Dendritic cell treated with granulocyte-macrophage colony-stimulating factor and Interleukin-4, amounts not matched to agents 40 ng/mL and 50 ng/mL, for 4 days (primary cell): ENCODE measurements at regions of chr1 and their contacts with region 1.

Region 1: GRCh38 chr1:151156515-151156819 is at the start of gene TNFAIP8L2:
- H3K4me3 Mint-ChIP-seq: peak within 1 kb of the TSS; percentile 87
- H3K27ac Mint-ChIP-seq: peak within 1 kb of the TSS; percentile 88
- H3K4me1 Mint-ChIP-seq: peaks cover 35% of the 10 kb centered on the region
- H3K27me3 Mint-ChIP-seq: no peaks in the 10 kb centered on the region

Region 2: GRCh38 chr1:150813058-150813707 is 343.3 kb before region 1 on chr1:
- intact Hi-C with region 1: no loop called
- H3K4me3 Mint-ChIP-seq: no peak overlapping the region
- H3K27ac Mint-ChIP-seq: no peak overlapping the region
- H3K4me1 Mint-ChIP-seq: peaks cover 15% of the 10 kb centered on the region
- H3K27me3 Mint-ChIP-seq: no peaks in the 10 kb centered on the region

Region 3: DNA sequence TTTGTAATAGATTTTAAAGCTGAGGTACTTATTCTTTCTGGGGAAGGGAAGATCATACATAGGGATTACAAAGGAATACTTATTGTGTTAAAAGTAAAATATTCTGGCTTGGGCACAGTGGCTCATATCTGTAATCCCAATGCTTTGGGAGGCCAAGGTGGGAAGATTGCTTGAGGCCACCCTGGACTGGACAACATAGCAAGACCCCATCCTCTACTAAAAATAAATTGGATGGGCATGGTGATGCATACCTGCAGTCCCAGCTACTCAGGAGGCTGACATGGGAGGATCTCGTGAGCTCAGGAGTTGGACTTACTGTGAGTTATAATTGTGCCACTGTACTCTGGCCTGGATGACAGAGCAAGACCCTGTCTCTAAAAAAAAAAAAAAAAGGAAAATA is 58.3 kb before region 1 on chr1:
- intact Hi-C with region 1: loop called (anchors 1 kb)
- H3K4me3 Mint-ChIP-seq: no peak overlapping the region
- H3K27ac Mint-ChIP-seq: no peak overlapping the region
- H3K4me1 Mint-ChIP-seq: no peaks in the 10 kb centered on the region
- H3K27me3 Mint-ChIP-seq: no peaks in the 10 kb centered on the region

Region 4: DNA sequence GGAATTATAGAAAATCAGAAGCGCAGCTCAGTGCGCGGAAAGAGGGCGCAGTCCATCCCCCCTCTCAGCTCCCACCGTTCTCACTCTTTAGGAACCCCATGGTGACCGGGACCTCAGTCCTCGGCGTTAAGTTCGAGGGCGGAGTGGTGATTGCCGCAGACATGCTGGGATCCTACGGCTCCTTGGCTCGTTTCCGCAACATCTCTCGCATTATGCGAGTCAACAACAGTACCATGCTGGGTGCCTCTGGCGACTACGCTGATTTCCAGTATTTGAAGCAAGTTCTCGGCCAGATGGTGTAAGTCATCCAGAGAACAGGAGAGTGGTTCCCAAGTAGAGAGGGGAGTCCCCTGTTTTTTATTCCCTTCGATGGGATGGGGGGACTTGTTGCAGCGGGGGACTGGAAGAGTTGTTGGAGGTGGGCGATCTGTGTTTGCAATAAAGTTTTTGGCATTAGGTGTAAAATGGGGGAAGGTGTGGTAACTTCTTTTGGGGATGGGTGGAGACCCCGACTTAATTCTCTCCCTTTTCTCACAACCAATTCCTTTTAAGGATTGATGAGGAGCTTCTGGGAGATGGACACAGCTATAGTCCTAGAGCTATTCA is 243.5 kb after region 1 on chr1:
- intact Hi-C with region 1: no loop called
- H3K4me3 Mint-ChIP-seq: peak overlapping the region; percentile 91
- H3K27ac Mint-ChIP-seq: peak overlapping the region; percentile 99
- H3K4me1 Mint-ChIP-seq: peaks cover 18% of the 10 kb centered on the region
- H3K27me3 Mint-ChIP-seq: peaks cover 5% of the 10 kb centered on the region

Region 5: DNA sequence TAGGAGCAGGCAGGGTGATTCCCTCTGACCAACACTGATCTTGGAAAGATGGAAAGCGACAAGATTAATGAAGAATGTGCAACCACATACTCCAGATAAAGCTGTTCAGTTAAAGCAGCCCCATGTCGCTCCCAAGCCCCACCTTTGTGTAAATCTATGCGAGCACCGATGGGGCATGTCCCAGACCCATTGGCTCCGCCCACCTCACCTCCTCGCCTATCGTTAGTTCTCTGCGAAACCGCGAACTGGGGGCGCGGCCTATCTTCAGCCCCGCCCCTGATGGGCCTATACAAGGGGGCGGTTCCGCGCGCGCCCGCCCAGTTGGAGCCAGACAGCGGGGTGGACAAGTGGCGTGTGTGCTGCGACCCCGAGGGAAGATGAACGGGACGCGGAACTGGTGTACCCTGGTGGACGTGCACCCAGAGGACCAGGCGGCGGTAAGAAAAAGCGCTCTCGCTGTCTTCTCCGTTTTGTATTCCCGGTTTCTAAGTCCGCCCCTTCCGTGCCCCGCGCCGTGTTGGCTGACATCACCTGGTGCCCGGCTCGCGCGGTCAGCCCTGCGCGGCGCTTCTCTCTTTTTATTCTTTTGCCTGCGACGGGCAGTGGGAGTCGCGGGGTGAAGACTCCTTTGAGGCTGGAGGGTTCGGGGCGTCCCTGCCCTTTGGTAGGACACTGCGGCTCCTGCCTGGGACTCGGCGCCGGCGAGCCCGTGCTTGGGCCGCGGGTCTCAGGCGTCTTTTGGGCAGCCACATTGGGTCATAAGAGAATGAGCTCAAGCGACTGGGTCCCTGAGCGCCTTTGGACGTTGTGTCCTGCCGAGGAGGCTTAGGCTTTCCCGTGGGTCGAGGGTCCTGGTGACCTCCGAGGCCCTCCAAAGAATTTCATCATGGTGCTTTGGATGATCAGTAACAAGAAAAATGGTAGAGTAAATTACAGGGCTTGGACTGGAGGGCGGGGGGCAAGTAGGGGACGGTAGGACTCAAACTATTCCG is 383.8 kb after region 1 on chr1 and contains the start of gene TUFT1:
- intact Hi-C with region 1: no loop called
- H3K4me3 Mint-ChIP-seq: peak within 1 kb of the TSS; percentile 93
- H3K27ac Mint-ChIP-seq: peak within 1 kb of the TSS; percentile 86
- H3K4me1 Mint-ChIP-seq: peaks cover 38% of the 10 kb centered on the region
- H3K27me3 Mint-ChIP-seq: peaks cover 38% of the 10 kb centered on the region